Panc1 (cell line): ENCODE measurements at regions of chr12 and their contacts with region 1.

Region 1: DNA sequence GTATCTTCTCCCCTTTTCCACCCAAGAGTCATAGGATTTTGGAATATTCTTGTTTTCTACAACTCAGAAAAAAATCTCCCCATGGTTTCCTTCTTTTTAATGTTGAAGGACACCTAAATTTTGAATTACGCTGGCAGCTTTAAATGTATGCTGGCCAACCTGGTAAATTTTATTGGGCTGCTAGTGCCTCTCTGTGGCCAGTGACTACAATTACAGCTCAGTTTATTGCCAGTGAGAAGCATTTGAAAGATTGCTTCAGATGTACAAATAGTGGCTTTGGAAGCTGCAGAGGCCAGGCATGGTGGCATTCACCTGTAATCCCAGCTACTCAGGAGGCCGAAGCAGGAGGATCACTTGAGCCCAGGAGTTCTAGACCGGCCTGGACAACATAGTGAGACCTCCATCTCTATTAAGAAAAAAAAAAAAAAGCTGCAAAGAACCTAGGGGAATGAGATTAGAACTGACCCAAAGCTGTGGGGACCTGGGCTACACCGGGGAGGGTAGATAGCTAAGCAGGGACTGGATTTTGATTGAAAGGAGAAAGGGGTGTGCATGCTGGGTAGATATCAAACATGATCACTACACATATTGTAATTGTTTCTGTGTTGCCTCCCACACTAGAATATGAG is 7.6 kb upstream of the RAB21 start:
- DNase-seq: no peak
- ATAC-seq: peak; percentile 94
- H3K4me3 ChIP-seq: no peak overlapping the region
- H3K27ac ChIP-seq: no peak overlapping the region
- H3K4me1 ChIP-seq: no peaks in the 10 kb centered on the region
- H3K27me3 ChIP-seq: peaks cover 4% of the 10 kb centered on the region
- CTCF ChIP-seq: peak; percentile 87

Region 2: GRCh38 chr12:71415336-71416231 is 331.5 kb before region 1 on chr12:
- CTCF ChIA-PET with region 1: interaction called, 7 read pairs
- POLR2A ChIA-PET with region 1: interaction called, 3 read pairs
- in situ Hi-C with region 1: no loop called
- intact Hi-C with region 1: loop called (anchors 5 kb)
- DNase-seq: peak; percentile 45
- ATAC-seq: peak; percentile 91
- H3K4me3 ChIP-seq: no peak overlapping the region
- H3K27ac ChIP-seq: no peak overlapping the region
- H3K4me1 ChIP-seq: no peaks in the 10 kb centered on the region
- H3K27me3 ChIP-seq: no peaks in the 10 kb centered on the region
- CTCF ChIP-seq: peak; percentile 76; the same call in 1 of the 2 replicates

Region 3: DNA sequence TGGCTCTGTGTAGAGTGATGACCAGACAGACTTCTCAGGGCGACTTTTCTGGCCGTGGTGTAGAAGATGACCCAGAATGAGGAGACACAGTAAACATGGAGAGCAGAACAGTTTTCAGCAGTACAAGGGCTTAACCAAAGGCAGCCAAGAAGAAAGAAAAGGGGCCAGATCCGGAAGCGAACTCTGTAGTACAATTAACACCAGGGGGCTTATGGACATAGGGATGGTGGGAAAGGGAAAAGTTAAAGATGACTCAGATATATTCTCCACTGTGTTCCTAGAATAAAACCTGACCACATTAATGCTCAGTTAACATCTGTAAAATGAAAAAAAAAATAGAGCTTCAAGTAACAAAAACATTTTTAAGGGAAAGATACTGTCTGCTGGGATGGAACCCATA is 247.3 kb before region 1 on chr12:
- CTCF ChIA-PET with region 1: no interaction called
- POLR2A ChIA-PET with region 1: no interaction called
- in situ Hi-C with region 1: no loop called
- intact Hi-C with region 1: no loop called
- DNase-seq: no peak
- ATAC-seq: no peak
- H3K4me3 ChIP-seq: no peak overlapping the region
- H3K27ac ChIP-seq: no peak overlapping the region
- H3K4me1 ChIP-seq: no peaks in the 10 kb centered on the region
- H3K27me3 ChIP-seq: no peaks in the 10 kb centered on the region
- CTCF ChIP-seq: no peak

Region 4: GRCh38 chr12:71636704-71637115 is 110.4 kb before region 1 on chr12:
- CTCF ChIA-PET with region 1: interaction called, 13 read pairs
- POLR2A ChIA-PET with region 1: no interaction called
- in situ Hi-C with region 1: no loop called
- intact Hi-C with region 1: loop called (anchors 5 kb)
- DNase-seq: peak; percentile 27
- ATAC-seq: peak; percentile 48; the same call in 1 of the 2 replicates
- H3K4me3 ChIP-seq: no peak overlapping the region
- H3K27ac ChIP-seq: peak overlapping the region; percentile 36; the same call in 1 of the 2 replicates
- H3K4me1 ChIP-seq: no peaks in the 10 kb centered on the region; the same call in 1 of the 2 replicates
- H3K27me3 ChIP-seq: no peaks in the 10 kb centered on the region
- CTCF ChIP-seq: peak; percentile 81

Region 5: DNA sequence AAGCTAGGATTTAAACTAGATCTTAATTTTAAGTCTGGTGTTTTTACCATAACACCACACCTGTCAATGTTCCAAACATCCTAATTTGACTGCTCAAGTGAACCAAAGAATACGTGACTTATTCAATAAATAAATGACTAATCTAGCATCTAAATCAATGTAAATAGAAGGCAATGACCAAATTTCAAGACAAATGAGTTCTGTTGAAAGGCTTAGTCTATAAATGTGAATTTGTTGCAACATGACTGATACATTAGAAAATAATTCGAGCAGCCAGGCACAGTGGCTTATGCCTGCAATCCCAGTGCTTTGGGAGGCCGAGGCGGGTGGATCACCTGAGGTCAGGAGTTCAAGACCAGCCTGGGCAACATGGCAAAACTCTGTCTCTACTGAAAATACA is 98.6 kb before region 1 on chr12:
- CTCF ChIA-PET with region 1: interaction called, 11 read pairs
- POLR2A ChIA-PET with region 1: no interaction called
- in situ Hi-C with region 1: no loop called
- intact Hi-C with region 1: no loop called
- DNase-seq: no peak
- ATAC-seq: no peak
- H3K4me3 ChIP-seq: no peak overlapping the region
- H3K27ac ChIP-seq: no peak overlapping the region
- H3K4me1 ChIP-seq: no peaks in the 10 kb centered on the region
- H3K27me3 ChIP-seq: no peaks in the 10 kb centered on the region
- CTCF ChIP-seq: no peak

Region 6: GRCh38 chr12:71663561-71664294 is 83.4 kb before region 1 on chr12 and contains the start of gene ZFC3H1:
- CTCF ChIA-PET with region 1: interaction called, 12 read pairs
- POLR2A ChIA-PET with region 1: no interaction called
- in situ Hi-C with region 1: no loop called
- intact Hi-C with region 1: no loop called
- DNase-seq: peak; percentile 94
- ATAC-seq: peak; percentile 98
- H3K4me3 ChIP-seq: peak within 1 kb of the TSS; percentile 97 to 98
- H3K27ac ChIP-seq: peak within 1 kb of the TSS; percentile 99
- H3K4me1 ChIP-seq: peaks cover 15% of the 10 kb centered on the region; the same call in 1 of the 2 replicates
- H3K27me3 ChIP-seq: no peaks in the 10 kb centered on the region
- CTCF ChIP-seq: peak; percentile 52
- total RNA-seq, gene ZFC3H1: 38.2 TPM

Region 7: GRCh38 chr12:71685914-71686665 is 61.0 kb before region 1 on chr12 and contains the start of gene TMEM19:
- CTCF ChIA-PET with region 1: interaction called, 10 read pairs
- POLR2A ChIA-PET with region 1: no interaction called
- in situ Hi-C with region 1: no loop called
- intact Hi-C with region 1: no loop called
- DNase-seq: no peak
- ATAC-seq: peak; percentile 98
- H3K4me3 ChIP-seq: peak within 1 kb of the TSS; percentile 76
- H3K27ac ChIP-seq: peak within 1 kb of the TSS; percentile 96
- H3K4me1 ChIP-seq: peaks cover 10% of the 10 kb centered on the region
- H3K27me3 ChIP-seq: no peaks in the 10 kb centered on the region
- CTCF ChIP-seq: peak; percentile 68
- total RNA-seq, gene TMEM19: 72.8 TPM

Region 8: GRCh38 chr12:71846322-71846940 is 99.3 kb after region 1 on chr12:
- CTCF ChIA-PET with region 1: no interaction called
- POLR2A ChIA-PET with region 1: interaction called, 13 read pairs
- in situ Hi-C with region 1: no loop called
- intact Hi-C with region 1: no loop called
- DNase-seq: no peak
- ATAC-seq: no peak
- H3K4me3 ChIP-seq: no peak overlapping the region
- H3K27ac ChIP-seq: no peak overlapping the region
- H3K4me1 ChIP-seq: peaks cover 11% of the 10 kb centered on the region; the same call in 1 of the 2 replicates
- H3K27me3 ChIP-seq: no peaks in the 10 kb centered on the region
- CTCF ChIP-seq: peak; percentile 75; the same call in 1 of the 2 replicates